ENCODE measurements at regions of chr17 and their contacts with region 1.

Region 1: DNA sequence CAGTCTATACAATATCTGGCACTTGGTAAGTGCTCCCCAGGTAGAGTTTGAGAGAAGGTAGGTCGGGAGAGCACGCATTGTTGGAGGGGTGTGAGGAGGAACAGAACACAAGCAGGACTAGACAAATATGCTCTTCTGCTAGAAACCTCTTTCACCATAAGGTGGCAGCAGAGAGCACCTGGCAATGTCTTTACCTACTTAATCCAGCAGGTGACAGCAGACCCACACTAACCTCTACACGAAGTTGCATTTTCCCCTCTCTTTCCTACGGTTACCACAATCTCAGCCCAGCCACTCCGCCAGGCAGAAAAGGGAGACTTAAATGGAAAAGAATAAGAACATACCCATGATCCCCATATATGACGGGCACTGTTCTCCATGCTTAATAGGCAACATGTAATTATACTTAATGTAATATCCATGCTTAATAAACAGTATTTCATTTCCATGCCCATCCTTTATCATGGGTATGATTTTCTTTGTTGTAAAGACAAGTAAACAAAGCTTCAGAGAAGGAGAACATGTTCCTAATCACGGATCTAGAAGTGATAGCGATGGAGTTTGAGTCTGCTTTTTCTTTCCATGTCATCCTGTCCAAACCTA is 55.1 kb upstream of the CCL2 start:
- DNase-seq: peak; percentile 90
- H3K4me3 ChIP-seq: no peak overlapping the region
- H3K27ac ChIP-seq: no peak overlapping the region
- H3K4me1 ChIP-seq: peaks cover 3% of the 10 kb centered on the region
- H3K27me3 ChIP-seq: peaks cover 13 to 34% of the 10 kb centered on the region in 2 experiments
- CTCF ChIP-seq: peak; percentile 100
- POLR2A ChIP-seq: no peak

Region 2: DNA sequence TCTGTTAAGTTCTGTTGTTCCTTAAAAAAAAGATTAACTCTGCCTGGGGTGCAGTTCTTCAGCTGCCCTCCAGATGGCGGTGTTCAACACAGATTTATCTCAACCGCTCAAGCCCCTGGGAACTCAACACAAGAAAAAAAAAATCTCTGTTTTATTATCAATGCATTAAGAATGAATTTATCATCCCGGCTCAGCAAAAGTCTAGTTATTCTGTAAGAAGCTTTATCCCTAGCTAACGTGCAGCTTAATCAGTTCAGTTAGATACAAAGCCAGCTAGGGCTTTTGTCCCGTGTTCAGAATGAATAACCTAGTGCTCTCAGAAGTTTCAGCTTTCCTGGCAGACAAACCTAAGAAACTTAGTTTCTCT is 420.8 kb before region 1 on chr17:
- CTCF ChIA-PET with region 1: no interaction called
- POLR2A ChIA-PET with region 1: no interaction called
- dilution Hi-C with region 1: no loop called
- intact Hi-C with region 1: loop called (anchors 5 kb)
- DNase-seq: peak; percentile 57
- H3K4me3 ChIP-seq: no peak overlapping the region
- H3K27ac ChIP-seq: no peak overlapping the region
- H3K4me1 ChIP-seq: no peaks in the 10 kb centered on the region
- H3K27me3 ChIP-seq: no peaks in the 10 kb centered on the region
- CTCF ChIP-seq: peak; percentile 74 to 85
- POLR2A ChIP-seq: no peak

Region 3: GRCh38 chr17:34099859-34100515 is 100.0 kb before region 1 on chr17:
- CTCF ChIA-PET with region 1: no interaction called
- POLR2A ChIA-PET with region 1: no interaction called
- dilution Hi-C with region 1: no loop called
- intact Hi-C with region 1: no loop called
- DNase-seq: no peak
- H3K4me3 ChIP-seq: no peak overlapping the region
- H3K27ac ChIP-seq: no peak overlapping the region
- H3K4me1 ChIP-seq: no peaks in the 10 kb centered on the region
- H3K27me3 ChIP-seq: no peaks in the 10 kb centered on the region
- CTCF ChIP-seq: no peak
- POLR2A ChIP-seq: no peak

Region 4: DNA sequence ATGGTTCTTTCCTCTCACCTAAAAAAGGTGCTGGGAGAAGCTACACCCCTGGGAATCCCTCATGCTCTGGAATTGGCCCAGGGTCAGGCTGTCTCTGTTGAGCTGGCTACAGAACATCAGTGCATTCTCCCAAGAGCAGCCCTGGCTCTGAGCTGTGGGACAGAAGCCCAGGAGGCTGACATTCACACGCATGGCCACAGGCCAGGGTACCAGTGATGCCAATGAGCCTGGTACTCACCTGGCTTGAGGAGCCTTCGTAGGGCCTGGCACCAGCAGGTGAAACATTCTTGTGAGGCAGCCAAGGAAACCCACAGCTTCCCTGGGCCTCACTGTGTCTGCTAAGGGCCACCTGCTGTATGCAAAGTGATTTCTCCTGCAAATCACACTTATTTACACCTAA is 66.7 kb before region 1 on chr17:
- CTCF ChIA-PET with region 1: no interaction called
- POLR2A ChIA-PET with region 1: no interaction called
- dilution Hi-C with region 1: no loop called
- intact Hi-C with region 1: no loop called
- DNase-seq: no peak
- H3K4me3 ChIP-seq: no peak overlapping the region
- H3K27ac ChIP-seq: no peak overlapping the region
- H3K4me1 ChIP-seq: no peaks in the 10 kb centered on the region
- H3K27me3 ChIP-seq: no peaks in the 10 kb centered on the region
- CTCF ChIP-seq: no peak
- POLR2A ChIP-seq: no peak

Region 5: DNA sequence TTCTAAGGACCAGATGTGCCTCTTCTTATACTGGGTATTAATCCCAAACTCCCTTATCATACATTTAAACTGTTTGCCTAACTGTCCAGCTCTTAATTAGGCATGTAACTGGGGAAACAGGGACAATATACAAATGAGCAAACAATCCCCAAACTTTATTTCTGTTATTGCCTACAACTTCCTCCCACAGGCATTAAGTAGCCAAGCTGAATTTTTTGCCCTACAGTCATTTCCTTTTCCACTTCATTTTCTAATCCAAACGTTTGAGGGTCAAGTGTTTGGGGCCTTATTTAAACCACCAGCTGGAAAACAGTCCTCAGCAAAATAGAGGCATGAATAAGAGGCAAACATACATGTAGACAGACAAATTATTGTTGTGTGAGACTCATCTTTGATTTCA is 22.4 kb before region 1 on chr17:
- CTCF ChIA-PET with region 1: no interaction called
- POLR2A ChIA-PET with region 1: no interaction called
- dilution Hi-C with region 1: no loop called
- intact Hi-C with region 1: loop called (anchors 1 kb)
- DNase-seq: peak; percentile 90
- H3K4me3 ChIP-seq: no peak overlapping the region
- H3K27ac ChIP-seq: peak overlapping the region; percentile 67
- H3K4me1 ChIP-seq: peaks cover 19% of the 10 kb centered on the region
- H3K27me3 ChIP-seq: peaks cover 21 to 25% of the 10 kb centered on the region in 2 experiments
- CTCF ChIP-seq: no peak
- POLR2A ChIP-seq: no peak

Region 6: DNA sequence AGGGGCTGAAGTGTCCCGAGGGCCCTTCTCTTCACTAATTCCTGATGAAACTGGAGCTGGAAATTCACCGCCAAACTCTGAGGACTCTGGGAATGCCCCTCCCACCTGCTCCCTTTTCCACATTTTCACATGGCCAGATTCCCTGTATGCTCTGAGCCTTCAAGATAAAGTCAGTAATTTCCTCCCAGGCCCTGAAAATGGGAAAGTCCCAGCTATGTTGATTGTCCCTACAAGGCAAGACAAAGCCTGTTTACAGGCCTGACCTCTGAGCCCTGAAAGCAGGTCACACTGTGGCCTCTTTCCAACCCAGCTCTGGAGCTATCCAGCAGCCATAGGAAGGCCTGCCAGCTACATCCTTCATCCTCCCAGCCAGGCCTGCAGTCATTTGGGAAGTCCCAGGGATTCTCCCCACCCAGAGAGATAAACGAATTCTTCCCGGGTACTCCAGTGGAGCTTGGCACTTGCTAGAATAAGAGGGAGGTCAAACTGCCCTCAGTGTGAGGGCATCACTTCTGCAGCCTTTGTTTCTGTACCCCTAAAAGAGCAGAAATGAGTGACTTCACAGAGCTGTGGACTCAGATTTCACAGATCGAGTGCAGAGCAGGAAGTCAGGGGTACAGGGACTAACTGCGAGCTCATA is 35.5 kb after region 1 on chr17:
- CTCF ChIA-PET with region 1: interaction called, 31 read pairs
- POLR2A ChIA-PET with region 1: no interaction called
- dilution Hi-C with region 1: no loop called
- intact Hi-C with region 1: no loop called
- DNase-seq: peak; percentile 97
- H3K4me3 ChIP-seq: no peak overlapping the region
- H3K27ac ChIP-seq: peak overlapping the region; percentile 78
- H3K4me1 ChIP-seq: peaks cover 54% of the 10 kb centered on the region
- H3K27me3 ChIP-seq: no peaks in the 10 kb centered on the region
- CTCF ChIP-seq: no peak
- POLR2A ChIP-seq: no peak

Region 7: DNA sequence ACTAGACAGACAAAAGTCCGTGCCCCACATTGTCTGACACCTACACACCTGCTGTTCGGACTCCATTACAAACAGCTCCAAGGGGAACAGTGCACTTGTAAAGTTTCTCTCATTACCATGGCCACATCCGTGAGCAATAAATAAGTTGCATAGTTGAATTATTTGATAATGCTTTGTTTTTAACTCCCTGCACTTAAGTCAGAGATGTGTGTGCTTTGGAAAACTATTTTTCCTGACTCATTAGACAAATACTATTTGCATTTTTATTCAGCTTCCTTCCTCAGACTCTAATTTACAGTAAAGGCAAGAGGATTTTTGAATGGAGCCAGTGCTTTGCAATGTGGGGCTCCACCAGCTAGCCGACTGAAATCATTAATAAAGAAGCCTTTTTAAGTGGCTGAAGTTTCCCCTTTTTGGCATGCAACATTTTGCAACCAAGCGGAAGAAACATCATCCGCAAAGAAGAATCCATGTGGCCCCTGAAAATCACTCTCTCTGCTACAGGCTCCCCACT is 48.5 kb after region 1 on chr17:
- CTCF ChIA-PET with region 1: interaction called, 19 read pairs
- POLR2A ChIA-PET with region 1: no interaction called
- dilution Hi-C with region 1: no loop called
- intact Hi-C with region 1: no loop called
- DNase-seq: peak; percentile 92
- H3K4me3 ChIP-seq: no peak overlapping the region
- H3K27ac ChIP-seq: peak overlapping the region; percentile 99
- H3K4me1 ChIP-seq: peaks cover 66% of the 10 kb centered on the region
- H3K27me3 ChIP-seq: no peaks in the 10 kb centered on the region
- CTCF ChIP-seq: no peak
- POLR2A ChIP-seq: no peak

Region 8: DNA sequence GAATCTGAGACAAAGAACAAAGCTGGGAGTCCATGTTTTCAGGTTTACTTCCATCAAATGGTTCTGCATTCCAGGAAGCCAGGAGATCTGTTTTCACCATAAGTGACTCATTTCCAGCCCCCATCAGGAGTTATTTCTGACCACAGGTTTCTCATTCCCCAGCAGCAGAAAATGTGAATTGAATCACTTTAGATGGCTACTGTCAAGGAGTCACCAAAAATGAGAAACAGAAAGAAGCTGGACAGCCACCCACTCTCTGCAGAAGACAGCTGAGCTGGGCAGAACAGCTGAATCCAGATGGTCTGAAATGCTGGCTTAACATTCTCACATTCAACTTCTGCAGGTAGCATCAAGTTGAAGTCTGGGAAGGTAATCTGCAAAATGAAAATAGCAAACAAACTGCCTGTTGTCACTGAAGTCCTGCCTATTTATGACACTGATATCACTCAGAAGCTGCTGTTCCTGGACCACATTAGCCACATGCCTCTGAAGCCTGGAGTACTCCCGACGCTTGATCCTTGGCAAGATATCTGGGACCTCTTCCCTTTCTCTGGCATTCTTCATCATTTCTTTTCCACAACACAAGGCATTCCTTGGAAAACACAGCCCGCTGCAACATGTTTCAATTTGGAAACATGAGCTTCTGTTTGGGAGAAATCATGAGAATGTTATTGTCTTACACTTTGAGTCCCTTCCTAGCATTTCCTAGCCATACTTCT is 100.8 kb after region 1 on chr17:
- CTCF ChIA-PET with region 1: interaction called, 202 read pairs
- POLR2A ChIA-PET with region 1: interaction called, 3 read pairs
- dilution Hi-C with region 1: loop called (anchors 25 kb)
- intact Hi-C with region 1: loop called (anchors 1 kb)
- DNase-seq: peak; percentile 44
- H3K4me3 ChIP-seq: no peak overlapping the region
- H3K27ac ChIP-seq: no peak overlapping the region
- H3K4me1 ChIP-seq: peaks cover 7% of the 10 kb centered on the region
- H3K27me3 ChIP-seq: peaks cover 0 to 2% of the 10 kb centered on the region in 2 experiments
- CTCF ChIP-seq: no peak
- POLR2A ChIP-seq: no peak

Region 9: GRCh38 chr17:34420254-34420766 is 220.3 kb after region 1 on chr17:
- CTCF ChIA-PET with region 1: interaction called, 18 read pairs
- POLR2A ChIA-PET with region 1: no interaction called
- dilution Hi-C with region 1: no loop called
- intact Hi-C with region 1: loop called (anchors 1 kb)
- DNase-seq: peak; percentile 78
- H3K4me3 ChIP-seq: no peak overlapping the region
- H3K27ac ChIP-seq: no peak overlapping the region
- H3K4me1 ChIP-seq: no peaks in the 10 kb centered on the region
- H3K27me3 ChIP-seq: peaks cover 25 to 26% of the 10 kb centered on the region in 2 experiments
- CTCF ChIP-seq: peak; percentile 88 to 93
- POLR2A ChIP-seq: no peak